ENCODE measurements at regions of chr10 and their contacts with region 1.

Region 1: GRCh38 chr10:119859420-119860258 is 13.0 kb downstream of the MCMBP start:
- DNase-seq: no peak
- ATAC-seq: peak; percentile 66

Region 2: DNA sequence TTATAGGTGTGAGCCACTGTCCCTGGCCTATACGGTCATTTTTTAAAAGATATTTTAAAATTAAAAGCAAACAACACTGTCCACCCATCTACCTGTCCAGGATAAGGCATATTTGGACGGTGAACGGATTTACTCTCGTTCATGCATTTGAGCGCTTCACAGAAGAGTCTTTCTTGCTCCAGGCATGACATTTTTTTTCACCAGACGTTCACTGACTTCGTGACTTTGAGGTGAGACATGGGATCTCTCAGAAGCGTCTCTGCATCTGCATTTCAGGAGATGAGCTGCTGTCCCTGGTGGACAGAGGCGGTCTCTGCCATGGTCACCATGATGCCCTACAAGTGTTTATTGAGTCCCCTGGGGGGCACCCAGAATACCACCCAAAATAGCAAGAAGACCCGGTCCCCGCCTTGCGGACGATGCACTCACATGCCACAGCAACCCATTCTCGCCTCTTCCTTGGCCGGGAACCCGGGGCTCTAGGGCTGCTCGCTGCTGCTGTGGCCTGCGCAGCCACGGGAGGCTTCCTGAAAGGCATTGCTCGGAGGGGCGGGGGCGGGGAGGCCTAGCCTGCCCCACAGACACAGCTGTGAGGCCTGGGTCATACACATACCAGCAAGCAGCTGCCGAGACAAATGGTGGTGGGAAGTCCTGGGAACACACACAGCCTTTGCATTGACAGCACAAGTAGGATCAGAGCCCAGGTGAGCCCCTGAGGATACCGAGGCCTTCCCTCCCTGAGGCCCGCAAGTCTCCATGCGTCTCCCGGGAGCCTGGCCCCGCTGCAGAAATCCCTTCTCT is 401.5 kb before region 1 on chr10:
- intact Hi-C with region 1: no loop called
- DNase-seq: no peak
- ATAC-seq: no peak

Region 3: DNA sequence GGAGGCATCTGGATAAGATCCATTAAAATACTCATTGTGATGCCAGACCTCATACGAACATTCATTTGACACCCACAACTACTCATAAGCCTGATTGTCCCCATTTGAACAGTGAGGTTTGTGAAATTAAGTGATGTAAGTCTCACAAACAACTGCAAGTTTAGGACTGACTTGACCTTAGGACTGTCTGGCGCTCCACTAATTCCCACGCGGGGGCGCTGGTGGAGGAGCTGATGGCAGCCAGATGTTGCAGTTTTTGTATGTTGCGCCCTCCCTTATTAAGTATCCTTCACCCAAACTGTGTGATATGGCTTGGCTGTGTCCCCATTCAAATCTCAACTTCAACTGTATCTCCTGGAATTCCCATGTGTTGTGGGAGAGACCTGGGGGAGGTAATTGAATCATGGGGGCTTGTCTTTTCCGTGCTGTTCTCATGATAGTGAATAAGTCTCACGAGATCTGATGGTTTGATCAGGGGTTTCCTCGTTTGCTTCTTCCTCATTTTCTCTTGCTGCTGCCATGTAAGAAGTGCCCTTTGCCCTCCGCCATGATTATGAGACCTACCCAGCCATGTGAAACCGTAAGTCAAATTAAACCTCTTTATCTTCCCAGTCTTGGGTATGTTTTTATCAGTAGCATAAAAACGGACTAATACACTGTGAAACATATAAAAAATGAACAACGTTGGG is 242.6 kb before region 1 on chr10:
- intact Hi-C with region 1: no loop called
- DNase-seq: no peak
- ATAC-seq: no peak

Region 4: GRCh38 chr10:119686439-119687191 is 173.0 kb before region 1 on chr10:
- intact Hi-C with region 1: loop called in 1 of 2 experiments (anchors 10 kb)
- DNase-seq: peak; percentile 62 to 69
- ATAC-seq: peak; percentile 95

Region 5: GRCh38 chr10:119750391-119751230 is 109.0 kb before region 1 on chr10:
- intact Hi-C with region 1: loop called in 1 of 2 experiments (anchors 5 kb)
- DNase-seq: peak; percentile 58 to 62
- ATAC-seq: peak; percentile 98

Measured in left colon (tissue), 2 donors.